ENCODE measurements at regions of chr2 and their contacts with region 1.

Region 1: GRCh38 chr2:119011162-119011909 is 69.3 kb downstream of the MARCO start:
- DNase-seq: no peak
- H3K4me3 ChIP-seq: no peak overlapping the region
- H3K27ac ChIP-seq: no peak overlapping the region
- H3K4me1 ChIP-seq: no peaks in the 10 kb centered on the region
- H3K27me3 ChIP-seq: peaks cover 9% of the 10 kb centered on the region
- CTCF ChIP-seq: no peak

Region 2: GRCh38 chr2:118830121-118830520 is 181.2 kb before region 1 on chr2:
- intact Hi-C with region 1: no loop called
- DNase-seq: no peak
- H3K4me3 ChIP-seq: no peak overlapping the region
- H3K27ac ChIP-seq: no peak overlapping the region
- H3K4me1 ChIP-seq: no peaks in the 10 kb centered on the region
- H3K27me3 ChIP-seq: peaks cover 37% of the 10 kb centered on the region
- CTCF ChIP-seq: no peak

Region 3: GRCh38 chr2:119174216-119175037 is 163.1 kb after region 1 on chr2:
- intact Hi-C with region 1: loop called (anchors 5 kb)
- DNase-seq: peak; percentile 51
- H3K4me3 ChIP-seq: no peak overlapping the region
- H3K27ac ChIP-seq: no peak overlapping the region
- H3K4me1 ChIP-seq: no peaks in the 10 kb centered on the region
- H3K27me3 ChIP-seq: no peaks in the 10 kb centered on the region
- CTCF ChIP-seq: peak; percentile 69

Measured in colonic mucosa (tissue), 4 donors.